ENCODE measurements at regions of chr14 and their contacts with region 1.

Region 1: GRCh38 chr14:50321009-50321660 is 9.0 kb downstream of the DMAC2L start:
- DNase-seq: peak; percentile 79
- H3K4me3 Mint-ChIP-seq: no peak overlapping the region
- H3K27ac Mint-ChIP-seq: no peak overlapping the region
- H3K4me1 Mint-ChIP-seq: peaks cover 22% of the 10 kb centered on the region
- H3K27me3 Mint-ChIP-seq: no peaks in the 10 kb centered on the region

Region 2: GRCh38 chr14:50231475-50232275 is 89.5 kb before region 1 on chr14 and contains the start of gene SOS2:
- CTCF ChIA-PET with region 1: interaction called, 4 read pairs
- POLR2A ChIA-PET with region 1: interaction called, 4 read pairs
- intact Hi-C with region 1: loop called (anchors 1 kb)
- DNase-seq: peak; percentile 86
- H3K4me3 Mint-ChIP-seq: peak within 1 kb of the TSS; percentile 78
- H3K27ac Mint-ChIP-seq: peak within 1 kb of the TSS; percentile 85
- H3K4me1 Mint-ChIP-seq: peaks cover 40% of the 10 kb centered on the region
- H3K27me3 Mint-ChIP-seq: no peaks in the 10 kb centered on the region
- total RNA-seq, gene SOS2: 19.6 to 20.9 TPM

Region 3: GRCh38 chr14:50288146-50288545 is 33.0 kb before region 1 on chr14:
- CTCF ChIA-PET with region 1: no interaction called
- POLR2A ChIA-PET with region 1: no interaction called
- intact Hi-C with region 1: no loop called
- DNase-seq: no peak
- H3K4me3 Mint-ChIP-seq: no peak overlapping the region
- H3K27ac Mint-ChIP-seq: no peak overlapping the region
- H3K4me1 Mint-ChIP-seq: no peaks in the 10 kb centered on the region
- H3K27me3 Mint-ChIP-seq: no peaks in the 10 kb centered on the region

Region 4: DNA sequence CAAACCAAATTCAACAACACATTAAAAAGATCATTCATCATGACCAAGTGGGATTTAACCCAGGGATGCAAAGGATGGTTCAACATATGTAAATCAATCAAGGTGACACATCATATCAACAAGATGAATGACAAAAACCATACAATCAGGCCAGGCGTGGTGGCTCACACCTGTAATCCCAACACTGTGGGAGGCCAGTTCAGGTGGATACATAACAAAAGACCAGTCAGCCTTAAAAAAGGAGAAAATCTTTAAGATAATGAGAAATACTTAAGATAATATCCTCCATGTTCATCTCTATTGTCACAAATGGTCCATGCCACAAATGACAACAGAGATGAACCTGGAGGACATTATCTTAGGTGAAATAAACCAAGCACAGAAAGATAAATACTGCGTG is 21.6 kb before region 1 on chr14:
- CTCF ChIA-PET with region 1: no interaction called
- POLR2A ChIA-PET with region 1: no interaction called
- intact Hi-C with region 1: no loop called
- DNase-seq: no peak
- H3K4me3 Mint-ChIP-seq: no peak overlapping the region
- H3K27ac Mint-ChIP-seq: no peak overlapping the region
- H3K4me1 Mint-ChIP-seq: peaks cover 2% of the 10 kb centered on the region
- H3K27me3 Mint-ChIP-seq: no peaks in the 10 kb centered on the region

Region 5: DNA sequence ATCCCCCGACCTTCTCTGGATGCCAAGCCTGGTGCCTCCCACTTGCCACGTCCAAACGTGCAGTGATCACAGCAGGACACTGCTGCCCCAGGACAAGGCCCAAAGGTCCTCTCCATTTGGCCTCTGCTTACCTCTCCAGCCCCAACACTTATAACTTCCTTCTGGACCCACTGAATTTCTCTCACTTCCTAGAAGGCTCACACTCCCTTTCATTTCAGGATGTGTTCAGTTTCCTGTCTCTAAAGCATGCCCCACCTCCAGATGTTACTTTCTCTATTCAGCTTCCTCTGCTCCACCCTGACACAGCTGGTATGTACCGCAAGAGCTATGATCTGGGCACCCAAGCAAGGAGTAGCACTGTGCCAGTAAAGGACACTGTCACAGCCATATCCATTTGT is 42.6 kb after region 1 on chr14:
- CTCF ChIA-PET with region 1: interaction called, 6 read pairs
- POLR2A ChIA-PET with region 1: interaction called, 9 read pairs
- intact Hi-C with region 1: loop called (anchors 1 kb)
- DNase-seq: peak; percentile 73
- H3K4me3 Mint-ChIP-seq: peak overlapping the region; percentile 72
- H3K27ac Mint-ChIP-seq: peak overlapping the region; percentile 84
- H3K4me1 Mint-ChIP-seq: peaks cover 17% of the 10 kb centered on the region
- H3K27me3 Mint-ChIP-seq: no peaks in the 10 kb centered on the region

Region 6: GRCh38 chr14:50452979-50453705 is 132.0 kb after region 1 on chr14:
- CTCF ChIA-PET with region 1: interaction called, 3 read pairs
- POLR2A ChIA-PET with region 1: no interaction called
- intact Hi-C with region 1: loop called (anchors 1 kb)
- DNase-seq: no peak
- H3K4me3 Mint-ChIP-seq: no peak overlapping the region
- H3K27ac Mint-ChIP-seq: peak overlapping the region; percentile 18
- H3K4me1 Mint-ChIP-seq: peaks cover 16% of the 10 kb centered on the region
- H3K27me3 Mint-ChIP-seq: no peaks in the 10 kb centered on the region

Region 7: GRCh38 chr14:50532502-50533240 is 211.5 kb after region 1 on chr14 and contains the start of gene MAP4K5:
- CTCF ChIA-PET with region 1: interaction called, 34 read pairs
- POLR2A ChIA-PET with region 1: interaction called, 3 read pairs
- intact Hi-C with region 1: loop called (anchors 1 kb)
- DNase-seq: peak; percentile 91
- H3K4me3 Mint-ChIP-seq: peak within 1 kb of the TSS; percentile 85
- H3K27ac Mint-ChIP-seq: peak within 1 kb of the TSS; percentile 58
- H3K4me1 Mint-ChIP-seq: peaks cover 42% of the 10 kb centered on the region
- H3K27me3 Mint-ChIP-seq: no peaks in the 10 kb centered on the region
- total RNA-seq, gene MAP4K5: 14.6 to 15.6 TPM

Region 8: GRCh38 chr14:50773632-50774541 is 452.8 kb after region 1 on chr14:
- CTCF ChIA-PET with region 1: interaction called, 15 read pairs
- POLR2A ChIA-PET with region 1: no interaction called
- intact Hi-C with region 1: loop called (anchors 2 kb)
- DNase-seq: peak; percentile 56
- H3K4me3 Mint-ChIP-seq: no peak overlapping the region
- H3K27ac Mint-ChIP-seq: no peak overlapping the region
- H3K4me1 Mint-ChIP-seq: peaks cover 16% of the 10 kb centered on the region
- H3K27me3 Mint-ChIP-seq: no peaks in the 10 kb centered on the region

Region 9: GRCh38 chr14:50830932-50831725 is 510.0 kb after region 1 on chr14 and contains the start of gene NIN:
- CTCF ChIA-PET with region 1: interaction called, 3 read pairs
- POLR2A ChIA-PET with region 1: no interaction called
- intact Hi-C with region 1: loop called (anchors 5 kb)
- DNase-seq: peak; percentile 77
- H3K4me3 Mint-ChIP-seq: peak within 1 kb of the TSS; percentile 92
- H3K27ac Mint-ChIP-seq: peak within 1 kb of the TSS; percentile 86
- H3K4me1 Mint-ChIP-seq: peaks cover 54% of the 10 kb centered on the region
- H3K27me3 Mint-ChIP-seq: peaks cover 6% of the 10 kb centered on the region
- total RNA-seq, gene NIN: 44.7 to 44.8 TPM

Measured in activated CD4-positive, alpha-beta memory T cell treated with anti-CD3 and anti-CD28 coated beads for 36 hours (primary cell).